ENCODE measurements at regions of chr13 and their contacts with region 1.

Region 1: DNA sequence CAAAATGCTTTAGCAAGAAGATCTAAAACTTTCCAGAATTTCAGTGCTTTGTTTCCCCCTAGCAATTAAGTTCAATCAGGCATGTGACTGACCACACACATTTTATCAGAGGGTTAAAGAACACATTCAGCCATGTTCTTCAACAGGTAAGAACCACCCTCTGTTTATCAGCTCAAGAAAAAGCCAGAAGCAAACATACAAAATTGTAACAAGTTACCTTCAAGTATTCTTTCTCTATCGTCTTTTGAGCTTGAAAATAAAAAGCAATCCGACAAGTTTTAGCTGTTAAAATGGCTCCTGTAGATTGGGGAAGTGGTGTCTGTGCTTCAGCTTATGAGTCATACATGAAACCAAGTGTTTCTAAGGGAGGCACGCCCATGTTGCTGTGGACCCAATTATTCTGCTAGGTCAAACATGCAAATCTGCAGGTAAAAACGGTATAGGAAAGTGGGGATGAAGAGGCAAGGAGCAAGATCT is at the start of gene ELF1:
- DNase-seq: peak in 8 of 9 donors; percentile 35 to 83 (median 75)
- ATAC-seq: peak; percentile 93
- H3K4me3 ChIP-seq: peak within 1 kb of the TSS; percentile 76
- H3K4me3 Mint-ChIP-seq: peak within 1 kb of the TSS; percentile 79 to 94 (median 90)
- H3K27ac ChIP-seq: peak within 1 kb of the TSS; percentile 93
- H3K27ac Mint-ChIP-seq: peak within 1 kb of the TSS; percentile 90 to 98 (median 96)
- H3K4me1 ChIP-seq: peaks cover 14 to 22% of the 10 kb centered on the region in 2 donors
- H3K4me1 Mint-ChIP-seq: peaks cover 29 to 61% (median 50%) of the 10 kb centered on the region in 7 donors
- H3K27me3 ChIP-seq: no peaks in the 10 kb centered on the region
- H3K27me3 Mint-ChIP-seq: no peaks in the 10 kb centered on the region
- total RNA-seq, gene ELF1: 117 to 193 (median 180) TPM

Region 2: GRCh38 chr13:39362652-39363381 is 1656.2 kb before region 1 on chr13:
- CTCF ChIA-PET with region 1: no interaction called
- POLR2A ChIA-PET with region 1: no interaction called
- intact Hi-C with region 1: no loop called
- DNase-seq: no peak
- ATAC-seq: no peak
- H3K4me3 ChIP-seq: no peak overlapping the region
- H3K4me3 Mint-ChIP-seq: no peak overlapping the region
- H3K27ac ChIP-seq: no peak overlapping the region
- H3K27ac Mint-ChIP-seq: no peak overlapping the region
- H3K4me1 ChIP-seq: no peaks in the 10 kb centered on the region
- H3K4me1 Mint-ChIP-seq: no peaks in the 10 kb centered on the region
- H3K27me3 ChIP-seq: peaks cover 0 to 6% of the 10 kb centered on the region in 2 donors
- H3K27me3 Mint-ChIP-seq: peaks cover 0 to 27% (median 26%) of the 10 kb centered on the region in 5 donors

Region 3: GRCh38 chr13:40777166-40777808 is 241.8 kb before region 1 on chr13:
- CTCF ChIA-PET with region 1: no interaction called
- POLR2A ChIA-PET with region 1: interaction called, 3 read pairs
- intact Hi-C with region 1: loop called in 1 of 2 experiments (anchors 5 kb)
- DNase-seq: peak in 2 of 9 donors; percentile 15 to 44
- ATAC-seq: peak; percentile 78
- H3K4me3 ChIP-seq: peak overlapping the region; percentile 37
- H3K4me3 Mint-ChIP-seq: peak overlapping the region; percentile 68 to 92 (median 82)
- H3K27ac ChIP-seq: peak overlapping the region; percentile 61
- H3K27ac Mint-ChIP-seq: peak overlapping the region; percentile 94 to 99 (median 97)
- H3K4me1 ChIP-seq: peaks cover 21 to 24% of the 10 kb centered on the region in 2 donors
- H3K4me1 Mint-ChIP-seq: peaks cover 19 to 36% (median 32%) of the 10 kb centered on the region in 7 donors
- H3K27me3 ChIP-seq: no peaks in the 10 kb centered on the region
- H3K27me3 Mint-ChIP-seq: no peaks in the 10 kb centered on the region

Region 4: GRCh38 chr13:40874138-40874779 is 144.8 kb before region 1 on chr13:
- CTCF ChIA-PET with region 1: no interaction called
- POLR2A ChIA-PET with region 1: no interaction called
- intact Hi-C with region 1: no loop called
- DNase-seq: peak in 2 of 9 donors; percentile 5 to 14
- ATAC-seq: no peak
- H3K4me3 ChIP-seq: no peak overlapping the region
- H3K4me3 Mint-ChIP-seq: no peak overlapping the region
- H3K27ac ChIP-seq: no peak overlapping the region
- H3K27ac Mint-ChIP-seq: no peak overlapping the region
- H3K4me1 ChIP-seq: no peaks in the 10 kb centered on the region
- H3K4me1 Mint-ChIP-seq: no peaks in the 10 kb centered on the region
- H3K27me3 ChIP-seq: no peaks in the 10 kb centered on the region
- H3K27me3 Mint-ChIP-seq: no peaks in the 10 kb centered on the region

Region 5: DNA sequence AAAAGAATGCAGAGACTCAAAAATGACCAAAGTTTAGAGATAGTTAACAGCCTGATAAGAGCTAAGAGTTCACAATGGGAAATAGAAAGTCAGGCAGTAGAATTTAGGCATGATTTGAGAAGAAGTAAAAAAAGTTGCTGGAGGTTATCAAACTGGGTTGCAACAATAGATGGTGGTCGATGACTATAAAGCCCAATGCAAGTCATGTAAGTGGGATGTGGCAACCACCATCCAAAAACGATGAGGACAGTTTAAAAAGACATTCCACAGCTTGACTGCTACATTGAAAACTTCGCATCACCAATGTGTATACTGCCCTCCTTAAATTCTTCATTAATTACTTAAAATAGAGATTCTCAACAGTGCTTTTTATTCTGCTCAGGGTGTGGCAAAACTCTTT is 19.6 kb before region 1 on chr13:
- CTCF ChIA-PET with region 1: interaction called, 3 read pairs
- POLR2A ChIA-PET with region 1: interaction called, 10 read pairs
- intact Hi-C with region 1: loop called in 1 of 2 experiments (anchors 2 kb)
- DNase-seq: no peak
- ATAC-seq: no peak
- H3K4me3 ChIP-seq: no peak overlapping the region
- H3K4me3 Mint-ChIP-seq: peak overlapping the region in 7 of 10 donors; percentile 3 to 58 (median 33)
- H3K27ac ChIP-seq: no peak overlapping the region
- H3K27ac Mint-ChIP-seq: peak overlapping the region in 8 of 9 donors; percentile 5 to 71 (median 47)
- H3K4me1 ChIP-seq: peaks cover 55 to 67% of the 10 kb centered on the region in 2 donors
- H3K4me1 Mint-ChIP-seq: peaks cover 52 to 99% (median 91%) of the 10 kb centered on the region in 7 donors
- H3K27me3 ChIP-seq: no peaks in the 10 kb centered on the region
- H3K27me3 Mint-ChIP-seq: no peaks in the 10 kb centered on the region

Region 6: DNA sequence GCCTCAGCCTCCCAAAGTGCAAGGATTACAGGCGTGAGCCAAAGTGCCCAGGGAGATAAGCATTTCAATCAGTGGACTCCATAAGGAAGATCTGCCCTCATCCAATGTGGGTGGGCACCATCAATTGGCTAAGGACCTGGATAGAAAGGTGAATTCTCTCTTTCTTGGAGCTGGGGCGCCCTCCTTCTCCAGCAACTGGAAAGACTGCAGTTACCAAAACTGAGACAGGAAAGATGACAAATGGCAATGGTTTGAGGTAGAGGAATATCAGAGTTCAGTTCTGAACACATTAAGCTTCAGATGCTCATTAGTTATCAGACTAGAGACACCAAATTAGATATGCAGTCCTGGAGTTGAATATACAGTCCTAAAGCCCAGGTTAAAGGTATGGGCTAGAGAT is 10.6 kb after region 1 on chr13:
- CTCF ChIA-PET with region 1: interaction called, 4 read pairs
- POLR2A ChIA-PET with region 1: interaction called, 4 read pairs
- intact Hi-C with region 1: loop called (anchors 1 kb)
- DNase-seq: no peak
- ATAC-seq: no peak
- H3K4me3 ChIP-seq: no peak overlapping the region
- H3K4me3 Mint-ChIP-seq: no peak overlapping the region
- H3K27ac ChIP-seq: no peak overlapping the region
- H3K27ac Mint-ChIP-seq: peak overlapping the region in 2 of 9 donors; percentile 64 to 76
- H3K4me1 ChIP-seq: peaks cover 0 to 5% of the 10 kb centered on the region in 2 donors
- H3K4me1 Mint-ChIP-seq: peaks cover 10 to 34% (median 27%) of the 10 kb centered on the region in 7 donors
- H3K27me3 ChIP-seq: no peaks in the 10 kb centered on the region
- H3K27me3 Mint-ChIP-seq: no peaks in the 10 kb centered on the region

Region 7: GRCh38 chr13:41132512-41133152 is 113.6 kb after region 1 on chr13 and contains the start of gene KBTBD6:
- CTCF ChIA-PET with region 1: no interaction called
- POLR2A ChIA-PET with region 1: no interaction called
- intact Hi-C with region 1: loop called in 1 of 2 experiments (anchors 1 kb)
- DNase-seq: peak; percentile 76 to 93 (median 87)
- ATAC-seq: peak; percentile 98
- H3K4me3 ChIP-seq: peak within 1 kb of the TSS; percentile 77
- H3K4me3 Mint-ChIP-seq: peak within 1 kb of the TSS; percentile 94 to 99 (median 98)
- H3K27ac ChIP-seq: peak within 1 kb of the TSS; percentile 67
- H3K27ac Mint-ChIP-seq: peak within 1 kb of the TSS; percentile 91 to 97 (median 93)
- H3K4me1 ChIP-seq: peaks cover 15 to 24% of the 10 kb centered on the region in 2 donors
- H3K4me1 Mint-ChIP-seq: peaks cover 32 to 60% (median 54%) of the 10 kb centered on the region in 7 donors
- H3K27me3 ChIP-seq: no peaks in the 10 kb centered on the region
- H3K27me3 Mint-ChIP-seq: no peaks in the 10 kb centered on the region
- total RNA-seq, gene KBTBD6: 3.9 to 9.2 (median 7.7) TPM

Region 8: DNA sequence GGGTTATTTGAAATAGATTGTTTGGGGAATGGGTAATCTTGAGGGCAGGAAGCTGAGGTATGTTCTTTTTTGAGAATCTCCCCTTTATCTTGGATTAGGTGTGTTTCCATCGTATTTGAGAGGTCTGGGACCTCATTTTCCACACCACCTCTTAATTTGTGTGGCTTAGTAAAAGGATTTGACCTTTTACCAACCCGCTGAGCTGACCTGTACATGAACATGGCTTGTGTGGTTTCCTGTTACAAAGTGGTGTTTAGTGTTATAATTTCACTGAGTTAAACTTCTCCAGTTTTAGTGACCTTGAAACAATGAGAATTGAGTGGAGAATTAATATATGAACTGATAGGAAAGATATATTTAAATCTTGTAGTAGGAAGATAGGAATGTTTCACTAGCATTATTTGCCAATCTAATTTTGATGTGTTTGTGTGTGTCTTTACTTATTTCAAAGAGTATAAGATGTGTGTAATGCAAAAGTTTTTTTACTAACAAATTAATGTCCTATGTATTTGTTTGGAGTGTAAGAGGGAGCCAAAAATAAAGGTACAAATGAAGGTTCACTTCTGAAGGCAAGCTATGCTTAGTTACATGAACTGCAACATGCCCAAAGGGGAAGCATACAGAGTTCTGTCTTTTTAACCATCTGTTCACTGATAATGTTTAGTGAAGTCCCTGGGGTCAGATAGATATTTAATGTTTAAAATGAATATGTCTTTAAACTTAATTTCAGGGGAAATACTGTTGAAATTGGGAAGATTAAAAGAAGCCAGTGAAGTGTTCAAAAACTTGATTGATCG is 309.1 kb after region 1 on chr13:
- CTCF ChIA-PET with region 1: no interaction called
- POLR2A ChIA-PET with region 1: no interaction called
- intact Hi-C with region 1: no loop called
- DNase-seq: no peak
- ATAC-seq: no peak
- H3K4me3 ChIP-seq: no peak overlapping the region
- H3K4me3 Mint-ChIP-seq: peak overlapping the region in 6 of 10 donors; percentile 1 to 54 (median 24)
- H3K27ac ChIP-seq: no peak overlapping the region
- H3K27ac Mint-ChIP-seq: peak overlapping the region in 5 of 9 donors; percentile 34 to 78 (median 55)
- H3K4me1 ChIP-seq: peaks cover 11 to 17% of the 10 kb centered on the region in 2 donors
- H3K4me1 Mint-ChIP-seq: peaks cover 15 to 83% (median 59%) of the 10 kb centered on the region in 7 donors
- H3K27me3 ChIP-seq: no peaks in the 10 kb centered on the region
- H3K27me3 Mint-ChIP-seq: no peaks in the 10 kb centered on the region